ENCODE measurements at regions of chr10 and their contacts with region 1.

Region 1: GRCh38 chr10:13099666-13100348 is at the start of gene OPTN:
- DNase-seq: peak; percentile 85

Region 2: GRCh38 chr10:13066527-13066926 is 33.3 kb before region 1 on chr10:
- CTCF ChIA-PET with region 1: no interaction called
- POLR2A ChIA-PET with region 1: no interaction called
- DNase-seq: no peak

Region 3: DNA sequence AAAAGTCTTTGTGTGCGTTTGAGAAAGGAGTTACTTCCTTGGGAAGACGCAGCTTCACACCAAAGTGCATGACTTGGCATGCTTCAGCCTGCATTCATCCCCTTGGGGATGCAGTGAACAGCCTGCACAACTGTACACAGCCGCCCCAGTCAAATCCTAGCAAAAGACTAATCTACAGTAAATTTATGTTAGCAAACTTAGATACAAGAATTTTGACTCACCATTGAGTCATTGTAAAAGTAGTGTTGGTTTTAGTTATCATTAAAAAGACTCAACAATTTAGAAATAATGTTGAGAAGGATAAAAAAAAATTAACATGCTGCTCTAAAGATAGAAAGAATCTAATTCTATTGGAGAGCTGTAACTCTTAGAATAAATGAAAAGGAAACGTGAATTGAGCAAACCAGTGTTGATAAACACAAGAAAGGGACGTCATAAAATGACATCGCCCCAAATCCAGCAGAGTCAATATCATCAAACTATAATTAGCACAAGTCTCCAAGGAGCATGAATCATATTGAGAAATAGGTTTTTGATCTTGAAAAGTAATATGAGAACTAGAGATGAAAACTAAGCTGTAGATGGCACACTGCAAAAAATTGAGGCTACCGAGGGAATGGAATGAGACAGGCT is 11.7 kb before region 1 on chr10:
- CTCF ChIA-PET with region 1: interaction called, 11 read pairs
- POLR2A ChIA-PET with region 1: no interaction called
- DNase-seq: no peak